HEK293 (cell line): ENCODE measurements at regions of chr10 and their contacts with region 1.

Region 1: DNA sequence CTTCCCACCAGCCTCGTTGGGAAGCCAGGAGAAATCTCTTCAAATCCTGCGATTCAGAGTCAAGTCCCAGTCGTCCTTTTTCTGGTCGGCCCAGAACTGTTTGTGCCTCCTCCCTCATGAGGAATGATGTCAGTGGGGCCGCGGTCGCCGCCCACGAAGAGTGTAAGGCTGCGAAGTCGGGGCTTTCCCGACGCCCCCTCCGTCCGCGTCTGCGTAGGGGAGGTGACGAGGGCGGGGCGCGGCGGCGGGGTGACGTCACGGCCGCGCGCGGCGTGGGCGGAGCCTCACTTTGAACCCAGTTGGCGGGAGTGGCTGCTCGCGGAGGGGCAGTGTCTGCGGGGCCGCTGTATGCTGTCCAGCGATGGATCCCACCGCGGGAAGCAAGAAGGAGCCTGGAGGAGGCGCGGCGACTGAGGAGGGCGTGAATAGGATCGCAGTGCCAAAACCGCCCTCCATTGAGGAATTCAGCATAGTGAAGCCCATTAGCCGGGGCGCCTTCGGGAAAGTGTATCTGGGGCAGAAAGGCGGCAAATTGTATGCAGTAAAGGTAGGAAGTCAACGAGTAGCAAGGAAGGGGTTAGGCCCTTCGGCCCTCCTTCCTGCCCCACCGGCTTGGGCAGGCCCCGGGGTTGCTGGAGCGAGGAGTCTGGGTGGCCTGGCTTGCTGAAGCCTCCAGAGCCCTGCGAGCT is at the start of gene MASTL:
- H3K4me3 ChIP-seq: peak within 1 kb of the TSS; percentile 94
- H3K27ac ChIP-seq: peak within 1 kb of the TSS; percentile 92
- H3K4me1 ChIP-seq: peaks cover 6% of the 10 kb centered on the region; the same call in 1 of the 2 replicates
- CTCF ChIP-seq: peak; percentile 29; the same call in 1 of the 2 replicates

Region 2: DNA sequence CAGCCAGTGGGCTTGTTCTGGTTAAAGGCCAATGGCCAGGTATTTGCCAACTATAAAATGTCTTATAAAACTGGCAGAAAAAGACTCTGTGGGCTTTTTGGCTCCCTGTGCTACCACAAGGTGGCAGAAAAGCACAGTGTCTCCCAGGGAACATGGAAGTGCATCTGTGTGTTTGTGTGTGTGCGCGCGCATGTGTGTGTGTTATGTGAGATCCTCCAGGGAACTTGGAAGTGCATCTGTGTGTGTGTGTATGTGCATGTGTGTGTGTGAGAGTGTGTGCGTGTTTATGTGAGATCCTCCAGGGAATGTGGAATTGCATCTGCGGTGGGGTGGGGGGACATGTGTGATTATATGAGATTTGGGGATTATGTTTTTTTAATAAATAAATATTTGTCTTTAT is 264.3 kb before region 1 on chr10:
- CTCF ChIA-PET with region 1: no interaction called
- POLR2A ChIA-PET with region 1: no interaction called
- H3K4me3 ChIP-seq: no peak overlapping the region
- H3K27ac ChIP-seq: no peak overlapping the region
- H3K4me1 ChIP-seq: no peaks in the 10 kb centered on the region
- CTCF ChIP-seq: peak; percentile 47; the same call in 1 of the 2 replicates

Region 3: GRCh38 chr10:27099916-27100812 is 55.0 kb before region 1 on chr10 and contains the start of gene ANKRD26:
- CTCF ChIA-PET with region 1: no interaction called
- POLR2A ChIA-PET with region 1: interaction called, 10 read pairs
- H3K4me3 ChIP-seq: peak within 1 kb of the TSS; percentile 83
- H3K27ac ChIP-seq: peak within 1 kb of the TSS; percentile 87
- H3K4me1 ChIP-seq: no peaks in the 10 kb centered on the region; the same call in 1 of the 2 replicates
- CTCF ChIP-seq: peak; percentile 51

Region 4: DNA sequence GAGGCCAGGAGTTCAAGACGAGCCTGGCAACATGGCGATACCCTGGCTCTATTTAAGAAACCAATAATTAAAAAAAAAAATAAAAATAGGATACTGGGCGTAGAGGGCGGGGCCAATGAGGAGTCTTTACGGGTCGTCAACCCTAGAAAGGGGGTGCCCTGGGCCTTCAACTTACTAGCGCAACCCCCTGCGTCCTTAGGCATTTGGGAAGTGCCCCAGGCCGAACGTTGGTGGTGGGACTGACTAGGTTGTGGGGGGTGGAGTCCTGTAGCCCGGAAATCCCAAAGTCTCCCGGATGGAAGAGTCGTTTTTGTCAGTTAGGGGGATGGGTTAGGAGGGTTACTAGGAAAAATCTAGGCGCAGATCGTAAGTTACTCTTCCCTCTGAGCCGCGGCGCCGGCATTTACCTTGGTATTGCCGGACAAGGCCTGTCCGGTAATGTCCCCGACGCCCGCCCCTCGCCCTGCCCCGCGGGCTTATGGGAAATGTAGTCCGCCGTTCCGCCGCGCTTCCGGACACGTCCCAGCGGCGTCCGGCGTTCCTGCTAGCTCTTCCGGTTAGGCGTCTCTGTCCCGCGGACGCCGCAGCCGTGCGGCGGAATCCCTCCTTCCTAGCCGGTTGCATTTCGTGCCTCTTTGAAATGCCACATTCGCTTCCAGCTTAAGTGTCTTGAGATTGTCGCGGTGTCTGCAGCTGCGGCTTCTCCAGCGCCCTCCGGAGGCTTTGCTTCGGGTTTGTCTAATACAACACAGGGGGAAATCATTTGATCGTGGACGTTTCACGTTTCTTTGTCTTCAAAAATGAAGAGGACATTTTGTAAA is 86.7 kb after region 1 on chr10:
- CTCF ChIA-PET with region 1: no interaction called
- POLR2A ChIA-PET with region 1: interaction called, 21 read pairs
- H3K4me3 ChIP-seq: peak overlapping the region; percentile 54
- H3K27ac ChIP-seq: peak overlapping the region; percentile 92
- H3K4me1 ChIP-seq: no peaks in the 10 kb centered on the region
- CTCF ChIP-seq: peak; percentile 75